GM12878 (cell line): ENCODE measurements at regions of chr3 and their contacts with region 1.

Region 1: GRCh38 chr3:45043728-45044299 is 17.7 kb downstream of the CLEC3B start:
- DNase-seq: no peak
- ATAC-seq: no peak
- H3K4me3 ChIP-seq: no peak overlapping the region
- H3K27ac ChIP-seq: no peak overlapping the region
- H3K4me1 ChIP-seq: peaks cover 12% of the 10 kb centered on the region
- H3K27me3 ChIP-seq: no peaks in the 10 kb centered on the region
- CTCF ChIP-seq: no peak
- EP300 ChIP-seq: no peak
- POLR2A ChIP-seq: no peak
- RAD21 ChIP-seq: no peak

Region 2: DNA sequence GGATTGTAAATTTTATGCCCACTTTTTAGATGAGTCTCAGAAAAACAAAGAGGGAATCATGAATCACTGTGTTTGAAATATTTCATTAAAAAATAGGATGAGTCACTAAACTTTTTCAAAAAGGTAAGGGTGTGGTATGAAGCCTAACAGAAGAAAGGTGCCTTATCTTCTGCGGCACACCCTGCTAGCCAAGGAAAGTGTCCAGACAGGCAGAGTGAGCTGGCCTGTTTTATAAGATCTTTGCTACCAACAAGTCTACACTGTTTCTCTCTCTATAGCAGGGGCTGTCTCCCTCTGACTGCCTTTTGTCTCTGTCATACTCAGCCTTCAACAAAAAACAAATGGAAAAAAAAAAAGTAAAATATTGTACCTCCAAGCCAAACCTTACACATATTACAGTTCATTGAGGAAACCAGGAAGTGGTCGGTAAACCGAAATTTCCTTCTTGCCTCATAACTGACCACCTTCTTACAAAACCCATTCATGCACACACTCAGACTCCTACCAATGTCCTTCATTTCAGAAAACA is 77.0 kb before region 1 on chr3:
- CTCF ChIA-PET with region 1: no interaction called
- POLR2A ChIA-PET with region 1: no interaction called
- RAD21 ChIA-PET with region 1: no interaction called
- SMC1A ChIA-PET with region 1: no interaction called
- in situ Hi-C with region 1: no loop called
- intact Hi-C with region 1: no loop called
- DNase-seq: no peak
- ATAC-seq: peak; percentile 80
- H3K4me3 ChIP-seq: no peak overlapping the region
- H3K27ac ChIP-seq: no peak overlapping the region
- H3K4me1 ChIP-seq: peaks cover 16% of the 10 kb centered on the region
- H3K27me3 ChIP-seq: no peaks in the 10 kb centered on the region
- CTCF ChIP-seq: no peak
- EP300 ChIP-seq: no peak
- POLR2A ChIP-seq: no peak
- RAD21 ChIP-seq: no peak

Region 3: DNA sequence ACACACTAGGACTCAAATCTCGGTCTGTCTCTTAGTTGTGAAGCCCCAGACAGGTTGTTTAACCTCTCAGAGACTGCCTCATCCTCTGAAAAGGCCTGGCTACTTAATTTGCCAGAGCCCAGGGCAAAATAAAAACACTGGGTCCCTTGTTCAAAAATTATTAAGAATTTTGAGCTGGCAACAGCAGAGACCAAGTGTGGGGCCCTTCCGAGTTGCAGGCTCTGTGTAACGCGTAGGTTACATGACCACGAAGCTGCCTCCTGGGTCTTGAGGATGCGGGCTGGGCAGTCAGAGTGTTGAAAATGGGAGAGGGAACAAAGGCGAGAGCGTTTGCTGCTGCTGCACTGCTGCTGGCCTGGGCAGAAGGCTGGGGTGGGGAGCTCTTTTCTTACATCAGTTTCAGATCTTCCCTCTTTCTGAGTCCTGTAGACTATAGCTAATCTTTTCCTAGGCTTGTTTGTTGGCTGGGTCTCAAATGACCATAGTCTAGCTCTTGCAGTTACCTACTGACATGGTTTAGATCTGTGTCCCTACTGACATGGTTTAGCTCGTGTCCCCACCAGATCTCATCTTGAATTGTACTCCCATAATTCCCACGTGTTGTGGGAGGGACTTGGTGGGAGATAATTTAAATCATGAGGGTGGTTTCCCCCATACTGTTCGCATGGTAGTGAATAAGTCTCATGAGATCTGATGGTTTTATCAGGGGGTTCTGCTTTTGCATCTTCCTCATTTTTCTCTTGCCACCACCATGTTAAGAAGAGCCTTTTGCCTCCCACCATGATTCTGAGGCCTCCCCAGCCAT is 32.2 kb after region 1 on chr3:
- CTCF ChIA-PET with region 1: no interaction called
- POLR2A ChIA-PET with region 1: no interaction called
- RAD21 ChIA-PET with region 1: interaction called, 3 read pairs
- SMC1A ChIA-PET with region 1: interaction called, 12 read pairs
- in situ Hi-C with region 1: no loop called
- intact Hi-C with region 1: no loop called
- DNase-seq: no peak
- ATAC-seq: no peak
- H3K4me3 ChIP-seq: no peak overlapping the region
- H3K27ac ChIP-seq: no peak overlapping the region
- H3K4me1 ChIP-seq: no peaks in the 10 kb centered on the region
- H3K27me3 ChIP-seq: no peaks in the 10 kb centered on the region
- CTCF ChIP-seq: no peak
- EP300 ChIP-seq: no peak
- POLR2A ChIP-seq: no peak
- RAD21 ChIP-seq: no peak

Region 4: GRCh38 chr3:45112939-45113338 is 69.1 kb after region 1 on chr3:
- CTCF ChIA-PET with region 1: interaction called, 23 read pairs
- POLR2A ChIA-PET with region 1: interaction called, 3 read pairs
- RAD21 ChIA-PET with region 1: interaction called, 17 read pairs
- SMC1A ChIA-PET with region 1: interaction called, 32 read pairs
- in situ Hi-C with region 1: no loop called
- intact Hi-C with region 1: no loop called
- DNase-seq: no peak
- ATAC-seq: no peak
- H3K4me3 ChIP-seq: no peak overlapping the region
- H3K27ac ChIP-seq: no peak overlapping the region
- H3K4me1 ChIP-seq: peaks cover 3% of the 10 kb centered on the region; the same call in 1 of the 2 replicates
- H3K27me3 ChIP-seq: no peaks in the 10 kb centered on the region
- CTCF ChIP-seq: no peak
- EP300 ChIP-seq: no peak
- POLR2A ChIP-seq: no peak
- RAD21 ChIP-seq: no peak

Region 5: GRCh38 chr3:45167011-45167911 is 123.4 kb after region 1 on chr3:
- CTCF ChIA-PET with region 1: interaction called, 14 read pairs
- POLR2A ChIA-PET with region 1: no interaction called
- RAD21 ChIA-PET with region 1: interaction called, 11 read pairs
- SMC1A ChIA-PET with region 1: interaction called, 4 read pairs
- in situ Hi-C with region 1: no loop called
- intact Hi-C with region 1: no loop called
- DNase-seq: no peak
- ATAC-seq: peak; percentile 87
- H3K4me3 ChIP-seq: no peak overlapping the region
- H3K27ac ChIP-seq: no peak overlapping the region
- H3K4me1 ChIP-seq: no peaks in the 10 kb centered on the region
- H3K27me3 ChIP-seq: peaks cover 0 to 5% of the 10 kb centered on the region in 2 experiments; a peak in 1 of 4 replicates
- CTCF ChIP-seq: no peak
- EP300 ChIP-seq: no peak
- POLR2A ChIP-seq: no peak
- RAD21 ChIP-seq: no peak

Region 6: GRCh38 chr3:45258317-45258716 is 214.5 kb after region 1 on chr3:
- CTCF ChIA-PET with region 1: interaction called, 3 read pairs
- POLR2A ChIA-PET with region 1: no interaction called
- RAD21 ChIA-PET with region 1: interaction called, 3 read pairs
- SMC1A ChIA-PET with region 1: interaction called, 13 read pairs
- in situ Hi-C with region 1: no loop called
- intact Hi-C with region 1: no loop called
- DNase-seq: no peak
- ATAC-seq: no peak
- H3K4me3 ChIP-seq: no peak overlapping the region
- H3K27ac ChIP-seq: no peak overlapping the region
- H3K4me1 ChIP-seq: no peaks in the 10 kb centered on the region
- H3K27me3 ChIP-seq: peaks cover 1 to 2% of the 10 kb centered on the region in 2 experiments; a peak in 3 of 4 replicates
- CTCF ChIP-seq: no peak
- EP300 ChIP-seq: no peak
- POLR2A ChIP-seq: no peak
- RAD21 ChIP-seq: no peak

Region 7: DNA sequence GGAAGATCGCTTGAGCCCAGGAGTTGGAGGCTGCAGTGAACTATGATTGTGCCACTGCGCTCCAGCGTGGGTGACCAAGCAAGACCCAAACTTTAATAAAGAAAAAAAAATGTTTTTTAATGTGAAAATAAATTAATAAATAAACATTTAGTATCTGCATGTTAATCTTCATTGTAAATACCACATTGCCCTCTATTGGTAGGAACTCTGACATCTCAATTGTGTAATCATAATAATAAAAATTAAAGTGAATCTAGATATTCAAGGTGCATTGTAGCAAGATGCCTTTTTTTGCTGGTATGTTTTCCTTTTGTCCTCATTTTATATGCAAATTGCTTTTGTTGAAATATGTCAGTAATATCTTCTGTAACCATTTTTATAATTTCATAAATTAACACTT is 455.7 kb after region 1 on chr3:
- CTCF ChIA-PET with region 1: interaction called, 26 read pairs
- POLR2A ChIA-PET with region 1: no interaction called
- RAD21 ChIA-PET with region 1: interaction called, 9 read pairs
- SMC1A ChIA-PET with region 1: interaction called, 15 read pairs
- in situ Hi-C with region 1: loop called (anchors 5 kb)
- intact Hi-C with region 1: no loop called
- DNase-seq: no peak
- ATAC-seq: no peak
- H3K4me3 ChIP-seq: no peak overlapping the region
- H3K27ac ChIP-seq: no peak overlapping the region
- H3K4me1 ChIP-seq: no peaks in the 10 kb centered on the region
- H3K27me3 ChIP-seq: no peaks in the 10 kb centered on the region
- CTCF ChIP-seq: peak in 1 of 3 experiments; percentile 22; a peak in 2 of 6 replicates
- EP300 ChIP-seq: no peak
- POLR2A ChIP-seq: no peak
- RAD21 ChIP-seq: peak; percentile 40

Region 8: GRCh38 chr3:45915518-45916231 is 871.9 kb after region 1 on chr3:
- CTCF ChIA-PET with region 1: no interaction called
- POLR2A ChIA-PET with region 1: no interaction called
- RAD21 ChIA-PET with region 1: no interaction called
- SMC1A ChIA-PET with region 1: no interaction called
- in situ Hi-C with region 1: no loop called
- intact Hi-C with region 1: no loop called
- DNase-seq: peak; percentile 98
- ATAC-seq: peak; percentile 92
- H3K4me3 ChIP-seq: peak overlapping the region; percentile 40; the same call in 1 of the 2 replicates
- H3K27ac ChIP-seq: peak overlapping the region; percentile 74
- H3K4me1 ChIP-seq: peaks cover 29% of the 10 kb centered on the region
- H3K27me3 ChIP-seq: no peaks in the 10 kb centered on the region; a peak in 1 of 4 replicates
- CTCF ChIP-seq: no peak
- EP300 ChIP-seq: peak; percentile 83 to 87
- POLR2A ChIP-seq: peak; percentile 54; the same call in 1 of the 2 replicates
- RAD21 ChIP-seq: peak; percentile 38